HepG2 (cell line): ENCODE measurements at regions of chr16 and their contacts with region 1.

Region 1: GRCh38 chr16:85027349-85027957 is at the start of gene KIAA0513:
- DNase-seq: peak; percentile 91
- ATAC-seq: peak; percentile 89
- H3K4me3 ChIP-seq: peak within 1 kb of the TSS; percentile 65 to 77 (median 69)
- H3K27ac ChIP-seq: no peak within 1 kb of the TSS
- H3K4me1 ChIP-seq: peaks cover 41% of the 10 kb centered on the region
- H3K27me3 ChIP-seq: peaks cover 3 to 28% of the 10 kb centered on the region in 2 experiments; a peak in 4 of 5 replicates
- CTCF ChIP-seq: peak; percentile 81
- EP300 ChIP-seq: no peak
- POLR2A ChIP-seq: peak; percentile 33 to 87; a peak in 2 of 4 replicates
- RAD21 ChIP-seq: peak; percentile 77
- total RNA-seq, gene KIAA0513: 1.5 and 1.8 TPM in 2 replicates

Region 2: GRCh38 chr16:84985079-84986065 is 42.1 kb before region 1 on chr16:
- CTCF ChIA-PET with region 1: no interaction called
- POLR2A ChIA-PET with region 1: no interaction called
- in situ Hi-C with region 1: no loop called
- intact Hi-C with region 1: no loop called
- DNase-seq: no peak
- ATAC-seq: no peak
- H3K4me3 ChIP-seq: no peak overlapping the region
- H3K27ac ChIP-seq: no peak overlapping the region
- H3K4me1 ChIP-seq: peaks cover 24% of the 10 kb centered on the region
- H3K27me3 ChIP-seq: no peaks in the 10 kb centered on the region
- CTCF ChIP-seq: no peak
- EP300 ChIP-seq: no peak
- POLR2A ChIP-seq: no peak
- RAD21 ChIP-seq: no peak

Region 3: DNA sequence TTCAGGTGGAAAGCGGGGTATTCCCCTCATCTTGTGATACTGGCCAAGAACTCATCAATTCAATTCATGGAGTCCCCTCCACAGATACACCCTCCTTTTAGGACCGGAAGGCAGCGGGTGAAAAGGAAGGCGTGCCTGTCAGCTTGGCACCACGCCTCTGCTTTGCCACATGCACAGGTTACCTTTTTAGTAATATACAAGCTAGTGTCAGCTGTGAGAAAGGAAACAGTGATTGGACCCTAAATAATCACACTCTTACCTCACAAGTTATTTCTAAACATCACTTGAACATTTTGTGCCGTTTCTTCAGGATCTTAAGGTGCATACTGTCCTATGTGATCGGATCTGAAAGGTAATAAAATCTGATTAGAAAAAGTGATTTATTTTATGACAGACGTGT is 31.8 kb before region 1 on chr16:
- CTCF ChIA-PET with region 1: no interaction called
- POLR2A ChIA-PET with region 1: interaction called, 13 read pairs
- in situ Hi-C with region 1: no loop called
- intact Hi-C with region 1: no loop called
- DNase-seq: no peak
- ATAC-seq: no peak
- H3K4me3 ChIP-seq: no peak overlapping the region
- H3K27ac ChIP-seq: peak overlapping the region; percentile 77
- H3K4me1 ChIP-seq: peaks cover 75% of the 10 kb centered on the region
- H3K27me3 ChIP-seq: no peaks in the 10 kb centered on the region
- CTCF ChIP-seq: no peak
- EP300 ChIP-seq: no peak
- POLR2A ChIP-seq: no peak
- RAD21 ChIP-seq: no peak

Region 4: DNA sequence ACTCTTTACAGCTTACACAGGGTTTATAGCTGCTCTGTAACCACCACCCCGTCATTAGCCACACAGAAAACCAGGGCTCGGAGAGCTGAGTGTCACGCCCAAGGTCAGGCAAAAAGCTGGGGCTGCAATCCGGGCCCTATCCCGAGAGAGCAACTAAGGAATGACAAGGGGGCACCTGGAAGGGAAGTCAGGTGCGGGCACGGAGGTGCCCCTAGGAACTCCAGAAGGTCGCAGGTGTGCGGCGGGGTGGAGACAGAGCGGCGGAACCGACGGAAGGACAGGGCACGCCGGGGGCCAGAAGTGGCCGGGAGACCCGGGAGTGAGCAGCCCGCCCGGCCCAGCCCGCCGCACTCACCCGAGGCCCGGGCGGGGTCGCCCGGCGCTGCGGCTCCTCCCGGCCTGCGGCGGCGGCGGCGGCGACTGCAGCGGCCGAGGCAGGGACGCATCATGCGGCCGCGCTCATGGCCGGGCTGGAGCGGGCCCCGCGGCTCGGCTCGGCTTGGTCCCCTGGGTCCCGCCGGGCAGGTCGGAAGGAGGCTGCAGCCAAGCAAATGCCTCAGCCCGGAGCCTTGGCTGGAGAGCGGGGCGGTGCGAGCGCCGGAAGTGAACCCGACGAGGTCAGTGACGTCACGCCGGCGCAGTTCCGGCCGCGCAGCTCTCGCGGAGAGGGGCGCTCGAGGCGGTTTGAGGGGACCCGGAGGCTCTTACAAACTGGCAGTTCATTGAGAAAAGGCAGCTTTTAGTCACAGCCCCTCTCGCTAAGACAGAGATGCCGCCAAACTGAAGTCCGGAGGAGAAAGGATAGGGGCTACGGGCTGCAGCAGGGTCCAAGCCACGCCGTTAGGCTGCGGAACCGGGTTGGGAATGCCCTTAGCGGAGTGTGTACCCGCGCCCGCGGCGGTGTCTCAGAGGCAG is 16.3 kb before region 1 on chr16 and contains the start of gene ZDHHC7:
- CTCF ChIA-PET with region 1: no interaction called
- POLR2A ChIA-PET with region 1: interaction called, 28 read pairs
- in situ Hi-C with region 1: no loop called
- intact Hi-C with region 1: no loop called
- DNase-seq: peak; percentile 76
- ATAC-seq: peak; percentile 89
- H3K4me3 ChIP-seq: peak within 1 kb of the TSS; percentile 79 to 97 (median 92)
- H3K27ac ChIP-seq: peak within 1 kb of the TSS; percentile 93
- H3K4me1 ChIP-seq: peaks cover 73% of the 10 kb centered on the region
- H3K27me3 ChIP-seq: no peaks in the 10 kb centered on the region; a peak in 2 of 5 replicates
- CTCF ChIP-seq: peak; percentile 49
- EP300 ChIP-seq: no peak; a peak in 1 of 4 replicates
- POLR2A ChIP-seq: peak; percentile 91 to 93; a peak in 3 of 4 replicates
- RAD21 ChIP-seq: peak; percentile 66
- total RNA-seq, gene ZDHHC7: 39.6 and 46.8 TPM in 2 replicates

Region 5: GRCh38 chr16:85061566-85061965 is 34.1 kb after region 1 on chr16:
- CTCF ChIA-PET with region 1: no interaction called
- POLR2A ChIA-PET with region 1: no interaction called
- in situ Hi-C with region 1: no loop called
- intact Hi-C with region 1: no loop called
- DNase-seq: no peak
- ATAC-seq: no peak
- H3K4me3 ChIP-seq: no peak overlapping the region
- H3K27ac ChIP-seq: no peak overlapping the region
- H3K4me1 ChIP-seq: peaks cover 12% of the 10 kb centered on the region
- H3K27me3 ChIP-seq: peaks cover 8 to 30% of the 10 kb centered on the region in 2 experiments; a peak in 4 of 5 replicates
- CTCF ChIP-seq: no peak
- EP300 ChIP-seq: no peak
- POLR2A ChIP-seq: no peak
- RAD21 ChIP-seq: no peak

Region 6: DNA sequence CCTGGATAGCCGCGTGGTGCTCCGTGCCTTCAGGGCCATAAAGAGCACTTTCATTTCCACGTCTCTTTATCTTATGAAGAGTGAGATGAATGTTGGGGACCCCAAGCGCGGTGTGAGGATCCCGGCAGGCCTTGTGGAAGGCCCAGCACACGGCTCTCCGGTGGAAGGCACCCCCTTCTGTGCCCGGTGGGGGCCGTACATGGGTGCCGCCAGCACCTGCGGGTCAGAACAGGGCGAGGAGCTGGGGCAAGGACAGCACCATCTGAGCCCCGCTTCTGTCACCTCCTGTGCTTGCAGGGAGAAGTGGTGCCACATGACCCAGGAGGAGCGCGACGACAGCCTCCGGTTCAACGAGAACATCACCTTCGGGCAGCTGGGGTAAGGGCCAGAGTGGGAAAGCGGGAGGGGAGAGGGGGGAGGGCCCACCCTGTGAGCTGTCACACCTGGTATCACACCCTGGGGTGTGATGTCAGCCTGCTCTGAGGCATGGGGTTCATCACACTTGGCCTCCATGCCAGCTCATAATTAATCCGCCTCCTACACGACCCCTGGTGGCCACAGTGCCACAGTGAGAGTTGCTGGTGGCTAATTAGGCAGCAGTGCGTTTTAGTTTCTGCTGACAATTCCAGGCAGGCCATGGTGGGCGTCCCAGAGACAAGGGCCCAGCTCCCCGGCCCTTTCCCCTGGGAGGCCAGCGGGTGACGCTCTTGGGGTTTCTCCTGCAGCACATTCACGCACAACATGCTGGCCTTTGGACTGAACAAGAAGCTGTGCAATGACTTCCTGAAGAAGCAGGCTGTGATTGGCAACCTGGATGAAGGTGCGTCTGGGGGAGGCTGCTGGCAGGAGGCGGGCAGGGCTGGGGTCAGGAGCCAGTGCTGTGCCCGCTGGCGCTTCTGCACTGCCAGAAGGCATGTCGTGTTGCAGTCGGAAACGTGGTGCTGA is 59.2 kb after region 1 on chr16:
- CTCF ChIA-PET with region 1: interaction called, 4 read pairs
- POLR2A ChIA-PET with region 1: no interaction called
- in situ Hi-C with region 1: no loop called
- intact Hi-C with region 1: loop called (anchors 2 kb)
- DNase-seq: peak; percentile 56
- ATAC-seq: peak; percentile 79
- H3K4me3 ChIP-seq: peak overlapping the region in 1 of 3 experiments; percentile 30; a peak in 1 of 6 replicates
- H3K27ac ChIP-seq: no peak overlapping the region
- H3K4me1 ChIP-seq: peaks cover 7% of the 10 kb centered on the region; the same call in 1 of the 2 replicates
- H3K27me3 ChIP-seq: peaks cover 23 to 84% of the 10 kb centered on the region in 2 experiments
- CTCF ChIP-seq: peak; percentile 92
- EP300 ChIP-seq: no peak
- POLR2A ChIP-seq: no peak
- RAD21 ChIP-seq: peak; percentile 64